ENCODE measurements at regions of chr6 and their contacts with region 1.

Region 1: DNA sequence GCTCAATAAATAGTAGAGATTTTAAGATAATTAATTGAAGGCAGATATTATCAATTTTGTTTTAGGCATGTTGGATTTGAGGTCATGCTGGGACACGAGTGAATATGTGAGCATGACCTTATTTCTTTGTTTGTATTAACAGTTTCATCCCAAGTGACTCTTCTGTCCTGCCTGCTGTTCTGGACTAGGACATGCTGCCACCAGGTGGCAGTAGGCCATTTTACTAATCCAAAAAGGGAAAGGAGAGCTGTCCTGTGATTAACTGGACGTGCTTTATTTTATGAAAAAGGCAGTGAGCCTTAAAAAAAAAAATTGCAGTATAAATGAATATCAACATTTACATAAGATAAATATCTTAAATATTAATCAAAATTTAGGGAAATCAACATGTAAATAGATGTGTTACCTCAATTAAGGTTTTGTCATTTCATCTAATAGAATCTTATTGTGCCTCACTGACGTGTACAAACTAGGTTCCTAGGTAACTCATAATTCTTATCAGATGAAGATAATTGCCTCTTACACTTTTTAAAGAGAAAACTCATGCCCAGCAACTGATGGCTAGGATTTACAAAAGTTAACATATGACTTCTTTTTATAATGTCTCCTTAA is 49.8 kb downstream of the FRK start:
- DNase-seq: peak in 2 of 3 donors; percentile 76 to 93
- ATAC-seq: peak; percentile 68
- H3K4me3 ChIP-seq: no peak overlapping the region
- H3K4me1 ChIP-seq: peaks cover 2% of the 10 kb centered on the region
- CTCF ChIP-seq: peak; percentile 78

Region 2: DNA sequence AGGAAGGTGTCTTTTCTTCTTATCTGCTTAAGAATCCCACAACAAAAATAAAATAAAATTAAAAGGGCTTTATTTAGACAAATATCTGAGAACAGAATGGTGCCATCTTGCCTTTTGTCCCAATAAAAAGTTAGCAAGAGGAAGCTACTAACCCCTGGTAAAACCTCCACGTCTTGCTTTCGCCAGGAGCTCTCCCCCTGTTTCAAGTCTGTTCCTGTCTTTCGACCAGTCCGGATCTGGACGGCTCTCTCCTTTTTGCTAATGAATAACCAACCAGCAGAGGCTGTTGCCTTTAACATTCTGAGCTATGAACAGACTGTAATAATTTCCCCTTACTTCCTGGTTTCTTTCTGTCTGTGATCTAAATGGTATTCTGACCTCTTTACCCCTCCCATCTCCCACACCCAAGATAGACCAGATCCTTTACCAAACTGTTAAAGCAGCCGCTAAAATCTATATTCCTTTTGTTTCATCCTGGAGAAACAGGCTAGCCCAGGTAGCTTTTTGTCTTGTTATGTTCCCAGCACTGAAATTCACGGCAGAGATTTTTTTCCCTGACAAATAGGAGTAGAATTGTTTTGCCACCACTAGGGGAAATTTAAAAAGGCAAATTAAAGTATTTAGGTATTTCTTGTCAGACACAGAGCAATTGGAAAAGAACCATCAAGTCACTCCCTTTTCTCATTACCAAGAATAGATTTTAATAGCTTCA is 49.8 kb after region 1 on chr6 and contains the start of gene FRK:
- intact Hi-C with region 1: loop called in 1 of 2 experiments (anchors 5 kb)
- DNase-seq: peak in 2 of 3 donors; percentile 60 to 80
- ATAC-seq: peak; percentile 91
- H3K4me3 ChIP-seq: peak within 1 kb of the TSS; percentile 18
- H3K4me1 ChIP-seq: no peaks in the 10 kb centered on the region
- CTCF ChIP-seq: no peak
- total RNA-seq, gene FRK: 8.0 to 25.8 (median 23.2) TPM

Region 3: GRCh38 chr6:116096979-116097816 is 86.3 kb after region 1 on chr6:
- intact Hi-C with region 1: loop called (anchors 2 to 5 kb)
- DNase-seq: no peak
- ATAC-seq: no peak
- H3K4me3 ChIP-seq: no peak overlapping the region
- H3K4me1 ChIP-seq: peaks cover 13% of the 10 kb centered on the region
- CTCF ChIP-seq: no peak

Measured in mucosa of descending colon (tissue), 3 donors.